ENCODE measurements at regions of chr9 and their contacts with region 1.

Region 1: DNA sequence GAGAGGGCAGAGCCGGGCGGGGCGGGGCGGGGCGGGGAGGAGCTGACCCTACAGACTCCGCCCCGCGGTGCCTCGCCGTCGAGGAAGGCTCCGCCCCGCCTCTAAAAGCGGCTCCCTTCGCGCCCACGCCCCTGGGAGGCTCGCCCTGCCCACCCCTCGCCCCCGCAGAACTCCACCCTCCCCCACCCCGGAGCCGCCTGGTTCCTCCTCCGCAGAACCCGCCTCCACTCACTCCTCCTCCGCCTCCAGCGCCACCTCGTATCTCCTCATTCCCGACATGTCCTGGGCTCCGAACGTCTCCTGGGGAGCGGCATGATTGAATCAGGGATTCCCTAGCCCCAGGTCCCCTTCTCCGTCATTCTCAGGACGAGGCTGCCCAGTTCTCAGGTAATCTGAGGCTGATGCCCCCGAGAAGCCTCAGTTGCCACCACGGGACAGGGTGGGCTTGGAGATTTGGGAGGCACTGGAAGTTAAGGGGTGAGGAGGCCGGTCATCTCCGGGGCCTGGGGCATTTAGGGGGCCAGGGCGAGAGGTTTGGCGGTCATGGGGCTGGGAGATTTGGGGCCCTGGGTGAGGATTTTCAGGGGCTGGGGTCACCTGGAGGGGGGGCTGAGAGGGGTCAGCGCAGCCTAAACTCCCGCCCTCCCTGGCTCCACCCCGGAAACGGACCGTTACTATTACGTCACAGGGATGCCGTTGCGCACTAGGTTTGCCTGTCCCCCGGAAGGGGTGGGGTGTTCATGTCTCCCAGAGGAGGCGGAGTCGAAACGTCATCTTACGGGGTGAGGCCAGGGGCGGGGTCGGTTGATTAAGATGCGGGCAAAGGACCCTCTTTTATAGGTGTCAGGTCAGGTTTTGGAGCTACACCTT is 3.2 kb upstream of the CCL27 start:
- DNase-seq: peak; percentile 74 to 90 (median 84)
- ATAC-seq: peak; percentile 90
- H3K4me3 ChIP-seq: peak overlapping the region; percentile 99
- H3K4me3 Mint-ChIP-seq: peak overlapping the region; percentile 89 to 97 (median 94)
- H3K27ac ChIP-seq: peak overlapping the region; percentile 98
- H3K27ac Mint-ChIP-seq: peak overlapping the region; percentile 86 to 98 (median 97)
- H3K4me1 ChIP-seq: peaks cover 33 to 40% of the 10 kb centered on the region in 2 donors
- H3K4me1 Mint-ChIP-seq: peaks cover 37 to 58% (median 50%) of the 10 kb centered on the region in 7 donors
- H3K27me3 ChIP-seq: no peaks in the 10 kb centered on the region
- H3K27me3 Mint-ChIP-seq: no peaks in the 10 kb centered on the region

Region 2: GRCh38 chr9:34178520-34179212 is 486.9 kb before region 1 on chr9 and contains the start of gene UBAP1:
- CTCF ChIA-PET with region 1: no interaction called
- POLR2A ChIA-PET with region 1: no interaction called
- intact Hi-C with region 1: loop called (anchors 5 to 10 kb)
- DNase-seq: peak; percentile 83 to 97 (median 93)
- ATAC-seq: peak; percentile 99
- H3K4me3 ChIP-seq: peak within 1 kb of the TSS; percentile 93
- H3K4me3 Mint-ChIP-seq: peak within 1 kb of the TSS; percentile 93 to 100 (median 96)
- H3K27ac ChIP-seq: peak within 1 kb of the TSS; percentile 97
- H3K27ac Mint-ChIP-seq: peak within 1 kb of the TSS; percentile 94 to 99 (median 98)
- H3K4me1 ChIP-seq: peaks cover 0 to 8% of the 10 kb centered on the region in 2 donors
- H3K4me1 Mint-ChIP-seq: peaks cover 7 to 33% (median 21%) of the 10 kb centered on the region in 7 donors
- H3K27me3 ChIP-seq: no peaks in the 10 kb centered on the region
- H3K27me3 Mint-ChIP-seq: no peaks in the 10 kb centered on the region
- total RNA-seq, gene UBAP1: 31.1 to 39.9 (median 32.8) TPM

Region 3: GRCh38 chr9:34458013-34458958 is 207.3 kb before region 1 on chr9 and contains the starts of genes DNAI1 and FAM219A:
- CTCF ChIA-PET with region 1: no interaction called
- POLR2A ChIA-PET with region 1: interaction called, 3 read pairs
- intact Hi-C with region 1: loop called (anchors 1 kb)
- DNase-seq: peak; percentile 97 to 100 (median 99)
- ATAC-seq: peak; percentile 98
- H3K4me3 ChIP-seq: peak within 1 kb of the TSS; percentile 68
- H3K4me3 Mint-ChIP-seq: peak within 1 kb of the TSS; percentile 86 to 93 (median 92)
- H3K27ac ChIP-seq: peak within 1 kb of the TSS; percentile 41
- H3K27ac Mint-ChIP-seq: peak within 1 kb of the TSS; percentile 57 to 93 (median 82)
- H3K4me1 ChIP-seq: peaks cover 13 to 16% of the 10 kb centered on the region in 2 donors
- H3K4me1 Mint-ChIP-seq: peaks cover 28 to 46% (median 38%) of the 10 kb centered on the region in 7 donors
- H3K27me3 ChIP-seq: no peaks in the 10 kb centered on the region
- H3K27me3 Mint-ChIP-seq: peaks cover 0 to 23% (median 6%) of the 10 kb centered on the region in 5 donors
- total RNA-seq, gene DNAI1: not detected
- total RNA-seq, gene FAM219A: 12.3 to 14.6 (median 13.4) TPM

Region 4: DNA sequence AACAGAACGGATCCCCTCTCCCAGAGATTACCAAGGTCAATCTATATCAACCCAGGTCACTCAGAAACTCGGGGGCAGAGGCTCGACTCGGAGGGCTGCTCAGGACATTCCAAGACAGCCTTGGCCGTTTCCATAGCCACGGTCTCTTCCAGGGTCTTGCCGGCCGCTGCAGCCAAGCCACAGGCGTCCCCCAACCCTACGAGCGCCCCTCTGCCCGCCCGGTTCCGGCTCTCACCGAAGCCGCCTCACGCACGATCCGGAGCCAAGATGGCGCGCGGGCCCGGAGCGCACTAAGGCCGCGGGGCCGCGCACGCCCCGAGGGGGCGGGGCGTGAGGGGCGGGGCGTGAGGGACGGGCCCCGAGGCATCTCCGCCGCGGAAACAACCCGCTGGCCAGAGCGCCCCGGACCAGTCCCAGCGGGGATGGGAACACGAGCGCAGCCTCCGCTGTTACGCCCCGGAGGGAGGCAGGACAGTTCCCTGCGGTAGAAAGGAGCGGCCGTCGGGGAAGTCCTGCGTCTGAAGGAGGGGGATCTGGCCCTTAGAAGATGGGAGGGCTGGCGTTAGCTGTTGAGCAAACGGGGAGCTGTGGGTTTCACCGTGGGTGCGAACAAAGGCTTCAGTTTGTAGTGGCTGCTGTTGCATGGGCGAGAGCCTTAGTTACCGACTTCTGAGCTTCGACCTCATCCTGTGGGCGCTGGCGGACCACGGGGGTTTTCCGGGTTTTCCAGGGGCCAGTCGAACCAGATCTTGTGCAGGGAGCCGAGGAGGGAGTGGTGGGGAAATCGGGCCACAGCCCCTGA is 53.6 kb before region 1 on chr9 and contains the start of gene RPP25L:
- CTCF ChIA-PET with region 1: interaction called, 4 read pairs
- POLR2A ChIA-PET with region 1: interaction called, 10 read pairs
- intact Hi-C with region 1: loop called (anchors 1 kb)
- DNase-seq: peak; percentile 75 to 94 (median 86)
- ATAC-seq: peak; percentile 96
- H3K4me3 ChIP-seq: peak within 1 kb of the TSS; percentile 89
- H3K4me3 Mint-ChIP-seq: peak within 1 kb of the TSS; percentile 84 to 96 (median 90)
- H3K27ac ChIP-seq: peak within 1 kb of the TSS; percentile 87
- H3K27ac Mint-ChIP-seq: peak within 1 kb of the TSS; percentile 84 to 96 (median 93)
- H3K4me1 ChIP-seq: peaks cover 10 to 17% of the 10 kb centered on the region in 2 donors
- H3K4me1 Mint-ChIP-seq: peaks cover 6 to 28% (median 21%) of the 10 kb centered on the region in 7 donors
- H3K27me3 ChIP-seq: no peaks in the 10 kb centered on the region
- H3K27me3 Mint-ChIP-seq: no peaks in the 10 kb centered on the region
- total RNA-seq, gene RPP25L: 8.8 to 27.3 (median 25.1) TPM

Region 5: GRCh38 chr9:34701769-34702736 is 36.4 kb after region 1 on chr9:
- CTCF ChIA-PET with region 1: interaction called, 11 read pairs
- POLR2A ChIA-PET with region 1: interaction called, 4 read pairs
- intact Hi-C with region 1: loop called (anchors 1 kb)
- DNase-seq: peak; percentile 59 to 83 (median 73)
- ATAC-seq: peak; percentile 90
- H3K4me3 ChIP-seq: peak overlapping the region; percentile 61
- H3K4me3 Mint-ChIP-seq: peak overlapping the region; percentile 80 to 91 (median 84)
- H3K27ac ChIP-seq: no peak overlapping the region
- H3K27ac Mint-ChIP-seq: peak overlapping the region in 7 of 9 donors; percentile 1 to 84 (median 20)
- H3K4me1 ChIP-seq: no peaks in the 10 kb centered on the region
- H3K4me1 Mint-ChIP-seq: peaks cover 5 to 9% (median 6%) of the 10 kb centered on the region in 7 donors
- H3K27me3 ChIP-seq: no peaks in the 10 kb centered on the region
- H3K27me3 Mint-ChIP-seq: peaks cover 0 to 17% (median 0%) of the 10 kb centered on the region in 5 donors

Region 6: DNA sequence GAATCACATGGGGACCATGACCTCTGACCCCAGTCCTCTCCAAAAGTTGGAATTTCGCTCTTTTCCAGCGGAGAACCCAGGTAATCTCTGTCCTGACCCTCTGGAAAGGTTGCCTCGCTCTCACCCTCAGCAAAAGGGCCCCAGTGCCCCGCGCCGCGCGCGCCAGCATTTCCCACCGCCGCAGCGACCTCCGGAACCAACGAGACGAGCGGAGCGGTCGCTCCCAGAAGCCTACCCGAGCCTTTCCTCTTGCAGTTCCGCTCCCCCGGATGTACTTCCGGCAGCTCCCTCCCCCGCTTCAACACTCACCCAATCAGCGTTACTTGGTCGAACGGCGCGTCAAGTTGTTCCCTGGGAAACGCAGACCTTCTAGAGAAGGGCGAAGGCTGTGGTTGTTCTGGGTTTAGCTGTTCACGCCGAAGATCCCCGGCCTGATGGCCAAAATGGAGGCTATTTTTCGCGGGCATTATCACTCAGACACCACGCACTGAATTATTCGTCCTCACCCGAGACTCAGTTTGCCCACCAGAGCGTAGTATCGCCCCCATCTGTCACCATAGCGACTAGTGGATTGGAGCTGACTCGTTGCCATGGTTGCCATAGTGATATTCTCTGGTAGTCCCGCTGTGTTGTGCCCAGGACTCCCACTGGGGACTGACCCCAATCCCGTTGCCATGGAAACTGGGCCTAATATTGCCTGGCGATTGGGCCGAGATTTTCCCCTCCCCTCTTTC is 437.5 kb after region 1 on chr9 and contains the start of gene STOML2:
- CTCF ChIA-PET with region 1: no interaction called
- POLR2A ChIA-PET with region 1: no interaction called
- intact Hi-C with region 1: loop called in 1 of 2 experiments (anchors 5 kb)
- DNase-seq: peak; percentile 72 to 95 (median 91)
- ATAC-seq: peak; percentile 98
- H3K4me3 ChIP-seq: peak within 1 kb of the TSS; percentile 92
- H3K4me3 Mint-ChIP-seq: peak within 1 kb of the TSS; percentile 88 to 98 (median 92)
- H3K27ac ChIP-seq: peak within 1 kb of the TSS; percentile 81
- H3K27ac Mint-ChIP-seq: peak within 1 kb of the TSS; percentile 92 to 99 (median 96)
- H3K4me1 ChIP-seq: peaks cover 12 to 18% of the 10 kb centered on the region in 2 donors
- H3K4me1 Mint-ChIP-seq: peaks cover 18 to 36% (median 33%) of the 10 kb centered on the region in 7 donors
- H3K27me3 ChIP-seq: no peaks in the 10 kb centered on the region
- H3K27me3 Mint-ChIP-seq: no peaks in the 10 kb centered on the region
- total RNA-seq, gene STOML2: 34.7 to 126 (median 44.9) TPM

Region 7: DNA sequence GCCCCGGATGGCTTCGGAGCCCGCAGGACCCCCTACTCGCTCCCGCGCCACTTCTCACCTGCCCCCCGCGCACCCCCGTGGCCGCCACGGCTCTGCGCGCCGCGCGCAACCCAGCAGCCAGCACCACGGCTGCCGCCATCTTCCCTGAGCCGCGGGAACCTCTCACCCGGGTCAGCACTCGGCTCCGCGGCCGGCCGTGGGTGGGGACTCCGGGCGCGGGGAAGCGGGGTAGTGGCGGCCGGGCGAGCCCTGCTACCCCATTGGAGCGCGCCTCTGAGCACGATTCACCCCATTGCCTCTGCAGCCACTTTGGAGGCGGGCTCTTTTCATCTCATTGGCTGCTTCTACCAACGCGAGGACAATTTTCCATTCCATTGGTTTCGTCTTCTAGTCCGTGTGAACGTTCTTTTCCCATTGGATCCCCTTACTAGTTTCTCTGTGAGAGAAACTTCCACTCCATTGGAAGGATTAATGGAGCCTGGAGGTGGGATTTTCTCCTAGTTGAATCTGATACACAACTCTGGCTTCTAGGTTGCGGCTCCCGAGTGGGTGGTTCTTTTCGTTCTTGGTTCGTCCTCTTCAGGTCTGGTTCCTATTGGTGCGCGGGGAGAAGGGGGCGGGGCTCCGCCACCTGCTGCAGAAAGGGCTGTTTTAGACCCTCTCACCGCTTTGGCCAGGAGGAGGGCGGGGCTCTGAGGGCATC is 1149.4 kb after region 1 on chr9 and contains the start of gene HINT2:
- CTCF ChIA-PET with region 1: no interaction called
- POLR2A ChIA-PET with region 1: no interaction called
- intact Hi-C with region 1: loop called (anchors 10 kb)
- DNase-seq: peak; percentile 84 to 98 (median 96)
- ATAC-seq: peak; percentile 86
- H3K4me3 ChIP-seq: peak within 1 kb of the TSS; percentile 100
- H3K4me3 Mint-ChIP-seq: peak within 1 kb of the TSS; percentile 91 to 100 (median 96)
- H3K27ac ChIP-seq: peak within 1 kb of the TSS; percentile 77
- H3K27ac Mint-ChIP-seq: peak within 1 kb of the TSS; percentile 87 to 99 (median 95)
- H3K4me1 ChIP-seq: peaks cover 19 to 27% of the 10 kb centered on the region in 2 donors
- H3K4me1 Mint-ChIP-seq: peaks cover 23 to 43% (median 38%) of the 10 kb centered on the region in 7 donors
- H3K27me3 ChIP-seq: no peaks in the 10 kb centered on the region
- H3K27me3 Mint-ChIP-seq: peaks cover 0 to 12% (median 0%) of the 10 kb centered on the region in 5 donors
- total RNA-seq, gene HINT2: 14.3 to 50.7 (median 22.2) TPM